Ascending aorta (tissue), 2 donors: ENCODE measurements at regions of chr15 and their contacts with region 1.

Region 1: GRCh38 chr15:73633111-73633990 is at the start of gene NPTN:
- DNase-seq: peak; percentile 94 to 99
- H3K4me3 ChIP-seq: peak within 1 kb of the TSS; percentile 85 to 98
- H3K27ac ChIP-seq: peak within 1 kb of the TSS; percentile 95 to 98
- H3K4me1 ChIP-seq: peaks cover 0 to 24% of the 10 kb centered on the region in 2 donors
- H3K27me3 ChIP-seq: no peaks in the 10 kb centered on the region
- CTCF ChIP-seq: no peak
- total RNA-seq, gene NPTN: 147 TPM

Region 2: GRCh38 chr15:72375847-72376581 is 1257.3 kb before region 1 on chr15 and contains the start of gene HEXA:
- intact Hi-C with region 1: loop called (anchors 10 kb)
- DNase-seq: peak; percentile 87 to 98
- H3K4me3 ChIP-seq: peak within 1 kb of the TSS; percentile 86 to 87
- H3K27ac ChIP-seq: peak within 1 kb of the TSS; percentile 84 to 89
- H3K4me1 ChIP-seq: peaks cover 0 to 13% of the 10 kb centered on the region in 2 donors
- H3K27me3 ChIP-seq: no peaks in the 10 kb centered on the region
- CTCF ChIP-seq: no peak
- total RNA-seq, gene HEXA: 111 TPM

Region 3: GRCh38 chr15:73560501-73561117 is 72.7 kb before region 1 on chr15:
- intact Hi-C with region 1: loop called (anchors 1 kb)
- DNase-seq: no peak
- H3K4me3 ChIP-seq: no peak overlapping the region
- H3K27ac ChIP-seq: no peak overlapping the region
- H3K4me1 ChIP-seq: peaks cover 0 to 4% of the 10 kb centered on the region in 2 donors
- H3K27me3 ChIP-seq: no peaks in the 10 kb centered on the region
- CTCF ChIP-seq: peak in 2 of 3 experiments; percentile 25 to 56

Region 4: GRCh38 chr15:73601451-73602445 is 31.6 kb before region 1 on chr15:
- intact Hi-C with region 1: loop called (anchors 2 kb)
- DNase-seq: no peak
- H3K4me3 ChIP-seq: no peak overlapping the region
- H3K27ac ChIP-seq: peak overlapping the region; percentile 64 to 69
- H3K4me1 ChIP-seq: peaks cover 31 to 85% of the 10 kb centered on the region in 2 donors
- H3K27me3 ChIP-seq: no peaks in the 10 kb centered on the region
- CTCF ChIP-seq: no peak

Region 5: GRCh38 chr15:73683777-73684580 is 50.6 kb after region 1 on chr15 and contains the start of gene CD276:
- intact Hi-C with region 1: loop called (anchors 1 kb)
- DNase-seq: peak; percentile 46 to 90
- H3K4me3 ChIP-seq: peak within 1 kb of the TSS; percentile 57 to 98
- H3K27ac ChIP-seq: peak within 1 kb of the TSS; percentile 68 to 95
- H3K4me1 ChIP-seq: peaks cover 13 to 28% of the 10 kb centered on the region in 2 donors
- H3K27me3 ChIP-seq: no peaks in the 10 kb centered on the region
- CTCF ChIP-seq: peak in 1 of 3 experiments; percentile 45
- total RNA-seq, gene CD276: 84.3 TPM

Region 6: GRCh38 chr15:73700041-73700842 is 66.9 kb after region 1 on chr15:
- intact Hi-C with region 1: loop called (anchors 1 kb)
- DNase-seq: peak in 1 of 2 donors; percentile 86
- H3K4me3 ChIP-seq: no peak overlapping the region
- H3K27ac ChIP-seq: no peak overlapping the region
- H3K4me1 ChIP-seq: peaks cover 6 to 12% of the 10 kb centered on the region in 2 donors
- H3K27me3 ChIP-seq: no peaks in the 10 kb centered on the region
- CTCF ChIP-seq: peak; percentile 86 to 93 (median 87)

Region 7: GRCh38 chr15:73786518-73786917 is 153.2 kb after region 1 on chr15:
- intact Hi-C with region 1: no loop called
- DNase-seq: no peak
- H3K4me3 ChIP-seq: no peak overlapping the region
- H3K27ac ChIP-seq: no peak overlapping the region
- H3K4me1 ChIP-seq: no peaks in the 10 kb centered on the region
- H3K27me3 ChIP-seq: no peaks in the 10 kb centered on the region
- CTCF ChIP-seq: no peak